ENCODE measurements at regions of chr7 and their contacts with region 1.

Region 1: DNA sequence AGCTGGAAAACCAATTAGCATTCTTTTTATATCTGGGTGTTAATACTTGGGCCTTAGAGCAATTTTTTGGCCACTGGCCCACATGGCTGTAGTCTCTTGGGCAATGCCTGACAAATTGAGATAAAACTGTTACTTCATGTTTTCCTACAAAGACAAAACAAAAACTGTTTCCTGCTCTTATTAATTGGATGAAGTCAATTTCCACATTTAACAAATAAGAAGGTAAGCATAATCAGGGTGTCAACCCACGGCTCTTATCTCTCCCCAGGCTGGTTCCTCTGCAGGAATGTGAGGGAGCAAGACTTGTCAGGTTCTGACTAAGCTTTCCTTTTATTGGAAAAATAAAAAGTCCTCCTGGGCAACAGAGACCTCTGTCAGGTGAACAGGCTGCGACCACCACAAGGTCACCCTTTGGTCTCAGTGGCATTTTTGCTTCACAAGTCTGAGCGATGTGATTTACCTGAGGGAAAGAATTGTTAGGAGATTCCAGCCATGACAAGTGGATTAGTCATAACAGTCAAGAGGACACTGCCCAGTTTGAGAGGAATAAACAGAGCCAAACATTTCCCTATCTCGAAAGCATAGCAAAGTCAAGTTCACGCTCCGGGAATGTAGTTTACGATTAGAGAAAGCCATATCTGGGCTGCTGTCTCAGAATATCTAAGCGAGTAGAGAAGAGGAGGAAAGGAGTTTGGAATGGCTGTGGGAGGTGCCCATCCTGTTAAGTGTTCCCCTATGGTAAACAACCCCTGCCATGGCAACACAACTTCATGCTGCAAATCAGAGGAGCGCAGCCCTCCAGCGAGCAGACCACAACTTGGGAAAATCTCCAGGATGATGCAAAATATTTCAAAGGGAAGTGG is 144.4 kb downstream of the TES start:
- DNase-seq: peak; percentile 81 to 83 (median 83)
- ATAC-seq: peak; percentile 78 to 89 (median 82)
- H3K4me3 ChIP-seq: peak overlapping the region in 9 of 12 donors; percentile 4 to 40 (median 28)
- H3K27ac ChIP-seq: peak overlapping the region; percentile 78 to 95 (median 86)
- H3K4me1 ChIP-seq: peaks cover 3 to 68% (median 54%) of the 10 kb centered on the region in 12 donors
- H3K27me3 ChIP-seq: no peaks in the 10 kb centered on the region
- CTCF ChIP-seq: peak in 1 of 12 donors; percentile 1
- POLR2A ChIP-seq: peak in 1 of 2 donors; percentile 18

Region 2: DNA sequence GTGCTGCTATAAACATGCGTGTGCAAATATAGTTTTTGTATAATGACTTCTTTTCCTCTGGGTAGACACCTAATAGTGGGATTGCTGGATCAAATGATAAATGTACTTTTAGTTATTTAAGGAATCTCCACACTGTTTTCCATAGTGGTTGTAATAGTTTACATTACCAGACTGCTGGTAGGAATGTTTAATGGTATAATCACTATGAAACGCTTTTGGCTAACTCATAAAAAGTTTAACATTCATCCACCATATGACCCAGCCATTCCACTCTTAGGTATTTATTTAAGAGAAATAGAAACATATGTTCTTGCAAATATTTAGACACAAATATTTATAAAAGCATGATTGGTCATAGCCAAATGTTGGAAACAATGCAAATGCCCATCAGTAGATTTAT is 292.1 kb before region 1 on chr7:
- intact Hi-C with region 1: no loop called
- DNase-seq: no peak
- ATAC-seq: no peak
- H3K4me3 ChIP-seq: no peak overlapping the region
- H3K27ac ChIP-seq: no peak overlapping the region
- H3K4me1 ChIP-seq: no peaks in the 10 kb centered on the region
- H3K27me3 ChIP-seq: no peaks in the 10 kb centered on the region
- CTCF ChIP-seq: no peak
- POLR2A ChIP-seq: no peak

Region 3: DNA sequence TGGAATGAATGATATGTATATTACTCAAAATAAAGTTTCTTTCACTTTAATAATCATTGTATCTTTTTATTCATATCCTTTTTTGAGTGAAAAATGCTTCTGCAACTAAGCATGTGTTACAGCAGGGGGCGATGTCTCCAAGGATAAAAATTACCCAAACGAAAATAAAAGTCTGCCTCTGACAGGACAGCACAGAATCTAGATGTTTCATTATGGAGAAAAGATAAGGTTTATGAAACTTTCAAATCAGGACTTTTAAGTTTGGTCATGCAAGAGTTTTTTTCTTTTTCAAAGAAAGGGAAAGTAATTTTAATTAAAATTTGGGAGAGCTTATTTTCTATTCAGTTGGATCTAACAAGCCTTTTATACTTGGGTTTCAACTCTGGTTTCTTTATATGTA is 96.0 kb before region 1 on chr7:
- intact Hi-C with region 1: loop called in 3 of 10 experiments (anchors 2 to 5 kb)
- DNase-seq: peak in 1 of 5 donors; percentile 27
- ATAC-seq: peak in 3 of 4 donors; percentile 36 to 69 (median 69)
- H3K4me3 ChIP-seq: no peak overlapping the region
- H3K27ac ChIP-seq: peak overlapping the region in 3 of 12 donors; percentile 6 to 49 (median 32)
- H3K4me1 ChIP-seq: peaks cover 0 to 9% (median 6%) of the 10 kb centered on the region in 12 donors
- H3K27me3 ChIP-seq: no peaks in the 10 kb centered on the region
- CTCF ChIP-seq: peak; percentile 56 to 93 (median 84)
- POLR2A ChIP-seq: no peak

Region 4: GRCh38 chr7:116316833-116317612 is 37.8 kb before region 1 on chr7:
- intact Hi-C with region 1: loop called in 1 of 10 experiments (anchors 5 kb)
- DNase-seq: peak; percentile 25 to 69 (median 40)
- ATAC-seq: peak; percentile 87 to 95 (median 92)
- H3K4me3 ChIP-seq: peak overlapping the region in 3 of 12 donors; percentile 2 to 23 (median 6)
- H3K27ac ChIP-seq: peak overlapping the region; percentile 41 to 81 (median 68)
- H3K4me1 ChIP-seq: peaks cover 0 to 23% (median 14%) of the 10 kb centered on the region in 12 donors
- H3K27me3 ChIP-seq: no peaks in the 10 kb centered on the region
- CTCF ChIP-seq: no peak
- POLR2A ChIP-seq: no peak

Region 5: DNA sequence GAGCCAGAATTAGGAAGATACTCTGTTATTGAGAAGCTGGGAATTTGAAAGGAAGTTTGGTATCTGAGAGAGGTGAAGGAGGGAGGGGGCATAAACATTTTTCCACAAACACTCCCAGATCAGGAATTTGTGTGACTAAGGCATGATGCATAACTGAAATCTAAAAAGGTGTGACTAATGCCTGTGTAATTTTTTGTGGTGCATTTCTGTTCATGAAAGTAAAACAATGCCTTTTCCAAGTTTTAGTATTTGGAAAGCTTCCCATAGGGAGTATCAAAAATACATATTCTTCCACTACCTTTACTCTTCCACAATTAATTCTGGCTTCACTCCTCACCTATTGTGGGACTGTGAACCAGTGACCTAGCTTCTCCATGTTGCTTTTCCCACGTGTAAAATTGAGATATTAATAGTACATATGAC is 88.3 kb after region 1 on chr7:
- intact Hi-C with region 1: loop called in 6 of 10 experiments (anchors 5 to 10 kb)
- DNase-seq: no peak
- ATAC-seq: peak in 2 of 4 donors; percentile 27 to 40
- H3K4me3 ChIP-seq: no peak overlapping the region
- H3K27ac ChIP-seq: peak overlapping the region in 5 of 12 donors; percentile 3 to 81 (median 59)
- H3K4me1 ChIP-seq: peaks cover 3 to 63% (median 40%) of the 10 kb centered on the region in 12 donors
- H3K27me3 ChIP-seq: no peaks in the 10 kb centered on the region
- CTCF ChIP-seq: no peak
- POLR2A ChIP-seq: no peak

Region 6: GRCh38 chr7:116499168-116500077 is 144.6 kb after region 1 on chr7 and contains the start of gene CAV2:
- intact Hi-C with region 1: loop called in 5 of 10 experiments (anchors 2 to 5 kb)
- DNase-seq: peak; percentile 86 to 88 (median 87)
- ATAC-seq: peak; percentile 79 to 93 (median 86)
- H3K4me3 ChIP-seq: peak within 1 kb of the TSS; percentile 75 to 95 (median 89)
- H3K27ac ChIP-seq: peak within 1 kb of the TSS; percentile 95 to 99 (median 98)
- H3K4me1 ChIP-seq: peaks cover 0 to 42% (median 24%) of the 10 kb centered on the region in 12 donors
- H3K27me3 ChIP-seq: peaks cover 0 to 17% (median 0%) of the 10 kb centered on the region in 9 donors
- CTCF ChIP-seq: no peak
- POLR2A ChIP-seq: peak in 1 of 2 donors; percentile 66
- total RNA-seq, gene CAV2: 189 to 345 (median 237) TPM

Region 7: GRCh38 chr7:116576350-116577319 is 221.9 kb after region 1 on chr7:
- intact Hi-C with region 1: loop called in 7 of 10 experiments (anchors 5 to 10 kb)
- DNase-seq: peak in 2 of 5 donors; percentile 28 to 57
- ATAC-seq: peak in 3 of 4 donors; percentile 70 to 77 (median 71)
- H3K4me3 ChIP-seq: no peak overlapping the region
- H3K27ac ChIP-seq: peak overlapping the region in 11 of 12 donors; percentile 12 to 81 (median 60)
- H3K4me1 ChIP-seq: peaks cover 0 to 58% (median 38%) of the 10 kb centered on the region in 12 donors
- H3K27me3 ChIP-seq: no peaks in the 10 kb centered on the region
- CTCF ChIP-seq: peak in 1 of 12 donors; percentile 7
- POLR2A ChIP-seq: no peak

Measured in heart left ventricle (tissue), 16 donors.